Common myeloid progenitor, CD34-positive (primary cell): ENCODE measurements at regions of chr7 and their contacts with region 1.

Region 1: GRCh38 chr7:92790992-92791391 is 45.4 kb downstream of the CDK6 start:
- DNase-seq: peak in 1 of 3 donors; percentile 30
- H3K4me3 ChIP-seq: no peak overlapping the region
- H3K27ac ChIP-seq: no peak overlapping the region
- H3K4me1 ChIP-seq: peaks cover 0 to 20% (median 9%) of the 10 kb centered on the region in 4 experiments
- H3K27me3 ChIP-seq: no peaks in the 10 kb centered on the region

Region 2: GRCh38 chr7:92809397-92810241 is 18.6 kb after region 1 on chr7:
- CTCF ChIA-PET with region 1: interaction called, 15 read pairs
- POLR2A ChIA-PET with region 1: no interaction called
- DNase-seq: peak; percentile 88 to 95 (median 95)
- H3K4me3 ChIP-seq: peak overlapping the region in 1 of 7 experiments; percentile 18
- H3K27ac ChIP-seq: peak overlapping the region; percentile 11 to 74
- H3K4me1 ChIP-seq: peaks cover 17 to 57% (median 29%) of the 10 kb centered on the region in 4 experiments
- H3K27me3 ChIP-seq: no peaks in the 10 kb centered on the region

Region 3: DNA sequence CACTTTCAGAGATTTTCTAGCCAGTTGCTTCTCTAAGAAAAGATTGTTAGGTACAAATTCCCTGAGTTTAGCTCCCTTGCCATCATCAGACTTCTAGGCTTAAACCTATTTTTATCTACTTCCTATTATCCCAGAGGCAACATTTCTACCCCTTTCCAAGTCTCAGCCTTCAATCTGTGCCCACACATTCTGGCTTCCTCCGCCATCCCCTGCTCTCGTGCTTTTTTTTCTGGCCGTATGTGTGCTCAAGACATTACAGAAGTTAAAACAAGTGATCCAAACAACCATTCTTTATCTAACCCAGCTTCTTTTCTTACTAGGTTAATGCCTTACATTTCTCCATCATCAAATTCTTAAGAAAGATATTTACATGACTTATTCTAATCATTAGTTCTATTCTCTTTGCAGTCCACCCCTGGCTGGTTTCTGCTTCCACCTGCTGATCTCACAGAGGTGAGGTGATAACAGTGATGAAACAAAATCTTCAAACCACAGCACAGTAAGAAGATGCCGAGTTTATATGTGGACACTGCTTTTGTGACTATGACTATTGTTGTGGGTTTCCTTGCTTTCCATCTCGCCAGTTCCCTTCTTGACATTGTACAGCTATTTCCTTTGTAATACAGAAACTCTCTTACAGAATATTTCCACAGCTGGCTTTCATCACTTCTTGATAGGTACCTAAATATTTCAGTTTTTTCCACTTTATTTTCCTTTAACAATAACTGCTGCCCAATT is 63.7 kb after region 1 on chr7:
- CTCF ChIA-PET with region 1: no interaction called
- POLR2A ChIA-PET with region 1: no interaction called
- DNase-seq: peak in 2 of 3 donors; percentile 50 to 55
- H3K4me3 ChIP-seq: peak overlapping the region in 1 of 7 experiments; percentile 29
- H3K27ac ChIP-seq: no peak overlapping the region
- H3K4me1 ChIP-seq: peaks cover 0 to 10% (median 6%) of the 10 kb centered on the region in 4 experiments
- H3K27me3 ChIP-seq: no peaks in the 10 kb centered on the region

Region 4: GRCh38 chr7:92933810-92934449 is 142.9 kb after region 1 on chr7:
- CTCF ChIA-PET with region 1: no interaction called
- POLR2A ChIA-PET with region 1: no interaction called
- DNase-seq: no peak
- H3K4me3 ChIP-seq: no peak overlapping the region
- H3K27ac ChIP-seq: no peak overlapping the region
- H3K4me1 ChIP-seq: no peaks in the 10 kb centered on the region
- H3K27me3 ChIP-seq: no peaks in the 10 kb centered on the region

Region 5: GRCh38 chr7:92953657-92954056 is 162.7 kb after region 1 on chr7:
- CTCF ChIA-PET with region 1: no interaction called
- POLR2A ChIA-PET with region 1: no interaction called
- DNase-seq: no peak
- H3K4me3 ChIP-seq: no peak overlapping the region
- H3K27ac ChIP-seq: no peak overlapping the region
- H3K4me1 ChIP-seq: no peaks in the 10 kb centered on the region
- H3K27me3 ChIP-seq: no peaks in the 10 kb centered on the region